HepG2 (cell line): ENCODE measurements at regions of chr9 and their contacts with region 1.

Region 1: GRCh38 chr9:706606-707459 is 134.7 kb upstream of the DMRT1 start:
- DNase-seq: peak; percentile 85
- ATAC-seq: peak; percentile 67
- H3K4me3 ChIP-seq: peak overlapping the region; percentile 44 to 74 (median 46); a peak in 5 of 6 replicates
- H3K27ac ChIP-seq: peak overlapping the region; percentile 83
- H3K4me1 ChIP-seq: peaks cover 84% of the 10 kb centered on the region
- H3K27me3 ChIP-seq: no peaks in the 10 kb centered on the region
- CTCF ChIP-seq: no peak
- EP300 ChIP-seq: peak in 1 of 2 experiments; percentile 5; a peak in 1 of 4 replicates
- POLR2A ChIP-seq: peak in 1 of 2 experiments; percentile 59; a peak in 3 of 4 replicates
- RAD21 ChIP-seq: peak; percentile 32; the same call in 1 of the 2 replicates

Region 2: DNA sequence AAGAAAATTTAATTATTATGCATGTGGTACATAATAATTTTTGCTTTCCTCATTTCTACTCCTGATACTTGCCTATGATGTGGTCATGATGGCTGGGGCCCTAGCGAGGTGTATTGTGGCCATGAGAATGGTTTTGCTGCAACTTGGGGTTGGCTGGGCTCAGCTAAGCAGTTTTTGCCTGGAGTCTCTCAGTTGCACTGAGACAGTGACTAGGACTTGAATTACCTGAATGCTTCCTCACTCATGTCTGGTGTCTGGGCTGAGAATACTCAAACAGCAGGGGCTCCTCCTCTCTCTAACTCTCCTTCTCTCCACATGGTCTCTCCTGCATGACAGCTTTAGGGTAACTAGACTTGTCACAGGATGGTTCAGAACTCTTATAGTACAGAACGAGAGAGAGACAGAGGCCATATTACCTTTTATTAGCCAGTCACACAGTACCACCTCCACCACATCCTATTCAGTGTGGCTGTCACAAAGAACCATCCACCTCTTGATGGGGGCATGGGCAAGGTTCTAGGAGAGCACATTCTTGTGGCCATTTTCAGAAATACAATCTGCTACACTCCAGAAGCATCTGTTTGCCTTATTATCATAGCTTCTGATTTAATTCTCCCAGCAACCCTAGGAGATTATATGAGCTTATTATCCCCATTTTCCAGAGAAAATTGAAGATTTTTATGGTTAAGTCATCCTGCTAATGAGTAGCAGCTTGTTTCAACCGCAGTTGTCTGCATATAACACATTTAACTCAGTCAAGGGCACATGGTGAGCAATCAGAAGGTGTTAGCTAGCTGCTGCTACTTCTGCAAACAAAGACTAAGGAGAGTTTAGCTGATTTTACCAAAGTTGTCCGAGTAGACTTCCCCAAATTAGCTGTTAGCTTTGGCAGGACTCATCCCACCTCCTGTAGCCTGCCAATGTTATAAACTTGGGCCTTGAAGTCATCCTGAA is 247.1 kb before region 1 on chr9:
- CTCF ChIA-PET with region 1: no interaction called
- POLR2A ChIA-PET with region 1: no interaction called
- in situ Hi-C with region 1: no loop called
- intact Hi-C with region 1: no loop called
- DNase-seq: no peak
- ATAC-seq: no peak; the same call in 1 of the 3 replicates
- H3K4me3 ChIP-seq: no peak overlapping the region
- H3K27ac ChIP-seq: no peak overlapping the region
- H3K4me1 ChIP-seq: peaks cover 14% of the 10 kb centered on the region
- H3K27me3 ChIP-seq: peaks cover 0 to 1% of the 10 kb centered on the region in 2 experiments; a peak in 1 of 5 replicates
- CTCF ChIP-seq: no peak
- EP300 ChIP-seq: no peak
- POLR2A ChIP-seq: no peak
- RAD21 ChIP-seq: no peak

Region 3: DNA sequence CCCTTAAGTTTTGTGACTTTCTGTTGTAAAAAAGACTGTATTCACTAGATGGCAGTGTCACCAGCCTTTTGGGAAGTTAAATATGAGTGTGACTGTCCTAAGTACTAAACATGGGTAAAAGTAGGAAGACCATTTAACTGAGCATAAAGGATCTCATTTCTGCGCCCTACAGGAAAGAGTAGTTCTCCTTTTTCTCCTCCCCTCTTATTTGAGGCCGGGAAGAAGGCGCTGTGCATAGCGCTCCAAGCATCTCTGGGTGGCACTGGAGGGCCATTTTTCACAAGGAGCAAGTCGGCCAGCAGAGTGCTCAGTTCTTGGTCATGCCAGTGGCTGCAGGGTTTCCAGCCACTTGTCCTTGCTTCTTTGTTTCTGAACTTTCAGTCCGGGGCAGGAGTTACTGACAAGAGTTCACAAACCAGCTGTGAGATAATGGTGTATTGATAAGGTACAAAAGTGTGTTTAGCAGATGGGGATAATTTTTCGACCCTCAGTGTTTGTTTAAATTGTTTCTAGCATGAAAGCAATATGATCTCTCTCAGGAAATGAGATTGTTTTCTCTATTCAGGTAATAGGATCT is 93.0 kb before region 1 on chr9:
- CTCF ChIA-PET with region 1: interaction called, 3 read pairs
- POLR2A ChIA-PET with region 1: interaction called, 10 read pairs
- in situ Hi-C with region 1: loop called (anchors 10 kb)
- intact Hi-C with region 1: loop called (anchors 1 kb)
- DNase-seq: peak; percentile 88
- ATAC-seq: peak; percentile 99
- H3K4me3 ChIP-seq: peak overlapping the region in 2 of 3 experiments; percentile 17 to 26; a peak in 3 of 6 replicates
- H3K27ac ChIP-seq: peak overlapping the region; percentile 36
- H3K4me1 ChIP-seq: peaks cover 39% of the 10 kb centered on the region
- H3K27me3 ChIP-seq: no peaks in the 10 kb centered on the region
- CTCF ChIP-seq: peak; percentile 97
- EP300 ChIP-seq: peak in 1 of 2 experiments; percentile 37; a peak in 1 of 4 replicates
- POLR2A ChIP-seq: no peak
- RAD21 ChIP-seq: peak; percentile 97

Region 4: GRCh38 chr9:677461-678097 is 29.3 kb before region 1 on chr9:
- CTCF ChIA-PET with region 1: no interaction called
- POLR2A ChIA-PET with region 1: interaction called, 320 read pairs
- in situ Hi-C with region 1: no loop called
- intact Hi-C with region 1: loop called (anchors 5 kb)
- DNase-seq: peak; percentile 54
- ATAC-seq: peak; percentile 9
- H3K4me3 ChIP-seq: peak overlapping the region; percentile 28 to 44 (median 33); a peak in 4 of 6 replicates
- H3K27ac ChIP-seq: peak overlapping the region; percentile 88
- H3K4me1 ChIP-seq: peaks cover 100% of the 10 kb centered on the region
- H3K27me3 ChIP-seq: no peaks in the 10 kb centered on the region
- CTCF ChIP-seq: no peak
- EP300 ChIP-seq: no peak
- POLR2A ChIP-seq: peak in 1 of 2 experiments; percentile 33; a peak in 2 of 4 replicates
- RAD21 ChIP-seq: no peak

Region 5: GRCh38 chr9:684054-684890 is 22.6 kb before region 1 on chr9:
- CTCF ChIA-PET with region 1: no interaction called
- POLR2A ChIA-PET with region 1: interaction called, 320 read pairs
- in situ Hi-C with region 1: no loop called
- intact Hi-C with region 1: loop called (anchors 1 kb)
- DNase-seq: no peak
- ATAC-seq: no peak
- H3K4me3 ChIP-seq: peak overlapping the region; percentile 67 to 74 (median 67)
- H3K27ac ChIP-seq: peak overlapping the region; percentile 94
- H3K4me1 ChIP-seq: peaks cover 79% of the 10 kb centered on the region
- H3K27me3 ChIP-seq: no peaks in the 10 kb centered on the region; a peak in 1 of 5 replicates
- CTCF ChIP-seq: no peak
- EP300 ChIP-seq: no peak
- POLR2A ChIP-seq: peak in 1 of 2 experiments; percentile 49; a peak in 1 of 4 replicates
- RAD21 ChIP-seq: no peak

Region 6: GRCh38 chr9:693201-694091 is 13.4 kb before region 1 on chr9:
- CTCF ChIA-PET with region 1: no interaction called
- POLR2A ChIA-PET with region 1: interaction called, 33 read pairs
- in situ Hi-C with region 1: no loop called
- intact Hi-C with region 1: no loop called
- DNase-seq: peak; percentile 49
- ATAC-seq: peak; percentile 60; the same call in 2 of the 3 replicates
- H3K4me3 ChIP-seq: peak overlapping the region in 2 of 3 experiments; percentile 17 to 25; a peak in 1 of 6 replicates
- H3K27ac ChIP-seq: peak overlapping the region; percentile 49
- H3K4me1 ChIP-seq: peaks cover 97% of the 10 kb centered on the region
- H3K27me3 ChIP-seq: no peaks in the 10 kb centered on the region
- CTCF ChIP-seq: no peak
- EP300 ChIP-seq: no peak
- POLR2A ChIP-seq: no peak
- RAD21 ChIP-seq: no peak

Region 7: DNA sequence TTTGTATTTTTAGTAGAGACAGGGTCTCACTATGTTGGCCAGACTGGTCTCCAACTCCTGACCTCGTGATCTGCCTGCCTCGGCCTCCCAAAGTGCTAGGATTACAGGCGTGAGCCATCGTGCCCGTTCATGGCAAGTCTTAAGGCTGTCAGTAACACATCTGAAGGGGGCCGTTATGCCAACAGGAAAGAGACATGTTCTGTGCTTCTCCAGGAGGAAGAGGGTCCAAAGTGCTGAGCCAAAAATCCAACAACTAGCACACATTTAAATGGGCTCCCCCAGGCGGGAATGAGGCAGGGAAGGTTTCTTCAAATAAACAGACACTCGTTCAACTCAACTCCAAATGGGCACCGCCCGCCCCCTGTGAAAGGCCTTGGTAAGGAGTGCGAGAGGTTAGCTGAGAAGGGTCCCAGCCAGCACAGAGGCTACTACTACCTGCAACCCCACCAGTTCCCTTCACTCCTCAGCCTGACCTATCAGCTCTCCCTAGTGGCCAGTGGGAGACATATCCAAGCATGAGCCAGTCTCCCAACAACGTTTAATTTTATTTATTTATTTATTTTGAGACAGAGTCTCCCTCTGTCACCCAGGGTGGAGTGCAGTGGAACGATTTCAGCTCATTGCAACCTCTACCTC is 50.5 kb after region 1 on chr9:
- CTCF ChIA-PET with region 1: no interaction called
- POLR2A ChIA-PET with region 1: interaction called, 14 read pairs
- in situ Hi-C with region 1: no loop called
- intact Hi-C with region 1: loop called (anchors 5 kb)
- DNase-seq: peak; percentile 69
- ATAC-seq: peak; percentile 72
- H3K4me3 ChIP-seq: no peak overlapping the region
- H3K27ac ChIP-seq: no peak overlapping the region
- H3K4me1 ChIP-seq: peaks cover 73% of the 10 kb centered on the region
- H3K27me3 ChIP-seq: no peaks in the 10 kb centered on the region
- CTCF ChIP-seq: peak; percentile 73
- EP300 ChIP-seq: no peak
- POLR2A ChIP-seq: no peak
- RAD21 ChIP-seq: peak; percentile 62